ENCODE measurements at regions of chr3 and their contacts with region 1.

Region 1: GRCh38 chr3:149752051-149752787 is at the start of gene COMMD2:
- DNase-seq: peak; percentile 88
- ATAC-seq: peak; percentile 100
- H3K4me3 Mint-ChIP-seq: peak within 1 kb of the TSS; percentile 95
- H3K27ac Mint-ChIP-seq: peak within 1 kb of the TSS; percentile 91
- H3K4me1 Mint-ChIP-seq: peaks cover 25% of the 10 kb centered on the region
- H3K27me3 Mint-ChIP-seq: no peaks in the 10 kb centered on the region
- total RNA-seq, gene COMMD2: 29.4 to 29.5 TPM

Region 2: DNA sequence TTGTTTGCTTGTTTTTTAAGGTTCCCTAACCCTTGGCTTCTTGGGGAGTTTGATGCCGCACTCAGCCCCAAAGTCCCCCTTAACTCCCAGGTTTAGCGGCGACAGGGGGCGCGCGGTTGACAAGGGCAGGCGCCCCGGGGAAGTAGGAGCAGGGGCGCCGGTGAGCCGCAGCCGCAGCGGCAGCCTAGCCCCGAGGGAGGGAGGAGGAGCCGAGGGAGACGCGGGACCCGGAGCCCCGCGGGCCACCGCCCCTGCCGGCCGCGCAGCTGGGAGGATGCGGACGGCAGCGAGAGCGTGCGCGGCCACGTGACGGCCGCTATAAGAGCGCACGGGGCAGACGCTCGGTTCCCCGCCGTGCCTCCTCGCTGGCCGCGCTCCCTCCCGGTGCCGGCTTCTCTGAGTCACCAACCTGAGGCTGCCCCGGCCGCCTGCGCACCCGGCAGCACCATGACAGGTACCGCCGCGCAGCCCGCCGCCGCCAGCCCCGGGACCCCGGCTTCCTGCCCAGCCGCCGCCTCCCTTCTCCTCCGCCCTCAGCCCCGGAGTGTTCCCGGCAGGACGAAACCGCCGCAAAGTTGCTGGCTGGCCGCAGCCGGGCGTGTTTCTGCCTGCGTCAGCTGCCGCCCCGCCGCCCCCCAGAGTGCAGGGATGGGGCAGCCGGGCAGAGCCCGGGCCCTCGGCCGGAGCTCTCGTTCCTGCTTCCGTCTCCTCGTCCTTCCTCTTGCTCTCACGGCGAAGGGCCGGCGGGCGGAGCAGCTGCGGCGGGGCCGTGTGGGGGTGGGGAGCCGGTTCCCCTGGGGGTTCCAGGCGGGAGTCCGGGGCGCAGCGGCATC is 760.8 kb before region 1 on chr3 and contains the start of gene GYG1:
- CTCF ChIA-PET with region 1: no interaction called
- POLR2A ChIA-PET with region 1: no interaction called
- intact Hi-C with region 1: loop called in 1 of 2 experiments (anchors 5 kb)
- DNase-seq: peak; percentile 85
- ATAC-seq: peak; percentile 91
- H3K4me3 Mint-ChIP-seq: peak within 1 kb of the TSS; percentile 76
- H3K27ac Mint-ChIP-seq: peak within 1 kb of the TSS; percentile 83
- H3K4me1 Mint-ChIP-seq: peaks cover 20% of the 10 kb centered on the region
- H3K27me3 Mint-ChIP-seq: no peaks in the 10 kb centered on the region
- total RNA-seq, gene GYG1: 13.3 to 14.0 TPM

Region 3: DNA sequence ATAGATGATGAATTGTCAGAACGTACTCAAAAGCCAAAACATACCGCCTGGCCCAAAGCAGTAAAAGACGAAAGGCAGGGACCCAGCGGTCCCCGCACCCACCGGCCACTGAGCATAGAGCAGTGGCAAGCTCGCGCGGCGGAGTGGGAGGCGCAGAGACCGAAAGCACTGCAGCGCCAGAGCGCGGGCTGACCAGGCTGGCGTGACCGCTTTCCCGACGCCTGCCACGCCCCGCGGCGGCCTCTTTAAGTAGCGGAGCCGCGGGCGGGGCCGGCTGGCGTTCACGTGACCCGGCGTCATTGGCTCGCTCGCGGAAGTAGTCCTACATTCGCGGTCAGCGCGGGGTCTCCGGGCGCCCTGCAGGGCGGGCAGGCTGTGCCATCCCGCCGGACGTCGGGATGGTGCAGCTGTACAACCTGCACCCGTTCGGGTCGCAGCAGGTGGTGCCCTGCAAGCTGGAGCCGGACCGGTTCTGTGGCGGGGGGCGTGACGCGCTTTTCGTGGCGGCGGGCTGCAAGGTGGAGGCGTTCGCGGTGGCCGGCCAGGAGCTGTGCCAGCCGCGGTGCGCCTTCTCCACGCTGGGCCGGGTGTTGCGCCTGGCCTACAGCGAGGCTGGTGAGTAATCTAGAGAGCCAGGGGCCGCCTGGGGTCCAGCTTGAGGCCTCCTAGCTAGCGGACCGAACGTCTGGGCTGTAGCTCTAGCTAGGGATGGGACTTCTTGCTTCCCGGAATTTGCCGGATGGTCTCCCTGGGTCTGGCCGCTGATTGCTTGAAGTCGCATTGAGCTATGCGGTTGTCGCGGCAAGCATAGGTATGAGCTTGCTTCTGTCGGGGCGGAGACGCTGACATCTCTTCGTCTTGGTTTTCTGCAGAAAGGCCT is 622.7 kb before region 1 on chr3 and contains the start of gene HPS3:
- CTCF ChIA-PET with region 1: no interaction called
- POLR2A ChIA-PET with region 1: no interaction called
- intact Hi-C with region 1: loop called in 1 of 2 experiments (anchors 5 kb)
- DNase-seq: peak; percentile 90
- ATAC-seq: peak; percentile 91
- H3K4me3 Mint-ChIP-seq: peak within 1 kb of the TSS; percentile 90
- H3K27ac Mint-ChIP-seq: peak within 1 kb of the TSS; percentile 82
- H3K4me1 Mint-ChIP-seq: peaks cover 37% of the 10 kb centered on the region
- H3K27me3 Mint-ChIP-seq: peaks cover 8% of the 10 kb centered on the region
- total RNA-seq, gene HPS3: 18.0 to 20.2 TPM

Region 4: DNA sequence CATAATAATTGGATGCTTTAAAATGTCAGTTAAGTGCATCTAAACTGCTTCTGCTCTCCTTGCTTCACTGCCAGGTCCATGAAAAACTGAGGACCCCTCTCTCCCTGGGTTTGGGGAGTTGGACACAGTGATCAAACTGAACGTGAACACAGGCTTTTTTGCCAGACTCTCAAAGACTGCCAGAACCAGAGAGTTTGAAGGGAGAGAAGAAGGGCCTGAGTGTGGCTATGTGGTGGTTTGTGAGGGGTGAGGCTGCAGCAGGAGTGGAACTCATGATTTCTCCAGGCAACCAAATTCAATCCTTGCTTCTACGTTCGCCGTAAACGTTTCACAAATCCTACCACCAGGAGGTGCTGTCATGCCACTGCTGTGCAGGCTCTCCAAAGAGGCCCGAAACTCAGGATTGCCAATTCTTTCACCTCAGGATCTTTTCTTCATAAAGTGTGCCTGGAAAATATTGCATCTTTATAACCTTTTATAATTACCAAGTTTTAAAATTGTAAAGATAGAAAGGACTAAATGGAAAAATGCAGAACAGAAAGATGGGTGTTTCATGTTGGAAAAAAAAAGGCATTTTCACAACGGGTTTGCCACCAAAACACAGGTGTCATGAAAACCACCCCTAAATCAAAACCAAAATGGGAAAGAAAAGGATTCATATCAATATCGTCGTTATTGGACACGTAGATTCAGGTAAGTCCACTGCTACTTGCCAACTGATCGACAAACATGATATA is 258.0 kb before region 1 on chr3:
- CTCF ChIA-PET with region 1: no interaction called
- POLR2A ChIA-PET with region 1: no interaction called
- intact Hi-C with region 1: loop called in 1 of 2 experiments (anchors 1 kb)
- DNase-seq: peak; percentile 67
- ATAC-seq: no peak
- H3K4me3 Mint-ChIP-seq: no peak overlapping the region
- H3K27ac Mint-ChIP-seq: no peak overlapping the region
- H3K4me1 Mint-ChIP-seq: no peaks in the 10 kb centered on the region
- H3K27me3 Mint-ChIP-seq: peaks cover 25% of the 10 kb centered on the region

Region 5: DNA sequence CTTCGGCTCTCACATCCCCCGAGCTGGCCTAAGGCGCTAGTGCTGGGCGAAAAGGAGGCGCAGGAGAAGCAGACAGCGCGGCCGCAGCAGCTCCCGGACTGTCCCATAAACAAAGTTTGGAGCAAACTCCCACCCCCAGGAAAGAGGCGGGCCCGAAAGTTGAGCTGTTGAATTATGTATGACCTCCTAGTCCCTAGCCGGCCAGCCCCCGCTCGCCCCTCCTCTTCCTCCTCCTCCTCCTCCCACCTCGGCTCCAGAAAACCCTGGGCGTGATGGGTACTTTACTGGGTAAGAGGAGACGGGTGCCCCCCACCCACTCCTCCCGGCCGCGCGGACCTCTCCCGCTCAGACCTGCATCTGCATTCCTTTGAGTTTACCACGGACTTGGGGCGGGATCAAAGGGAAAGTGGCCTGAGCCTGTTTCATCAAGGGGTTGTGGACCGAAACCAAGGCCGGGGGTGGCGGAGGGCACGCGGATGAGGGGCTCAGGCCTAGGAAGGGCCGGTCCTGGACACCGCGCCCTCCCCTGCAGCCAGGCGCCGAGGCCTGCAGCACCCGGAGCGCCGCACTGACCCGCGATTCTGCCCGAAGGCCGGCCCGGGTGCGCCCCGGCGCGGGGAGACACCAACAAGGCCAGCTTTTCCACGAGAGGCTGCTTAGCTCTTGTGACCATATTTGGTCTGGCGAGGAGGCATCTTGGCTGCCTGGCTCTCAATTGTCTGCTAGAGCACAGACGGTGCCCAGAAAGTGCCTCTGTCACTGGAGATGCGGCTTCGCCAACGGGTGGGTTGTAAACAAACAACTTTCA is 94.1 kb before region 1 on chr3 and contains the start of gene WWTR1:
- CTCF ChIA-PET with region 1: interaction called, 3 read pairs
- POLR2A ChIA-PET with region 1: no interaction called
- intact Hi-C with region 1: loop called in 1 of 2 experiments (anchors 2 kb)
- DNase-seq: peak; percentile 61
- ATAC-seq: peak; percentile 71
- H3K4me3 Mint-ChIP-seq: peak within 1 kb of the TSS; percentile 69
- H3K27ac Mint-ChIP-seq: peak within 1 kb of the TSS; percentile 57
- H3K4me1 Mint-ChIP-seq: peaks cover 12% of the 10 kb centered on the region
- H3K27me3 Mint-ChIP-seq: peaks cover 50% of the 10 kb centered on the region
- total RNA-seq, gene WWTR1: 0.46 to 0.54 TPM

Region 6: DNA sequence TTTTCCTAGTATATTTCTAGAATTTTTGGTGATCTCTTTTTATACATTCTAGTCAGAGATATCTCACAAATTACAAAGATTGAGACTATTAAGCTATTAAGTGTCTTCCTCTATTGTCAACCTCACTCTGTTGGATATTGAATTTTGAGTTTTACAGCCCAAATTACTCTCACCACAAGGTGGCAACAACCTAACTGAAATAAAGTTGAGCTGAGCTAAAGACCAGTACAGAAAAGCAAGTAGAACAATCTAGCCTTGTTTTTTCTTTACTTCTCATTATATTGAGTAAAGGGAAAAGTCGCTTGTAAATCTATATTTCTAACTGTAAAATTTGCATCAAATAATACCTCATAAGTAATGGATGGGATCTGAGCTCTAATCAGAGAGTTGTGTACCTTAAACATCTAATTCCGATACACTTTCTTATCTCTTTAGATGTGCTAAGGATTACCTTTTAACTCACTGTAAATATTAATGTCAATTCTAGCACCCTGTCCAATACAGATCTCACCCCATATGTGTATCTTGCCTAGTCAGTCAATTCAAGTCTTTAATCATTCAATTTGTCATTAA is 13.6 kb after region 1 on chr3:
- CTCF ChIA-PET with region 1: interaction called, 24 read pairs
- POLR2A ChIA-PET with region 1: no interaction called
- intact Hi-C with region 1: no loop called
- DNase-seq: no peak
- ATAC-seq: no peak
- H3K4me3 Mint-ChIP-seq: no peak overlapping the region
- H3K27ac Mint-ChIP-seq: no peak overlapping the region
- H3K4me1 Mint-ChIP-seq: no peaks in the 10 kb centered on the region
- H3K27me3 Mint-ChIP-seq: peaks cover 24% of the 10 kb centered on the region

Region 7: DNA sequence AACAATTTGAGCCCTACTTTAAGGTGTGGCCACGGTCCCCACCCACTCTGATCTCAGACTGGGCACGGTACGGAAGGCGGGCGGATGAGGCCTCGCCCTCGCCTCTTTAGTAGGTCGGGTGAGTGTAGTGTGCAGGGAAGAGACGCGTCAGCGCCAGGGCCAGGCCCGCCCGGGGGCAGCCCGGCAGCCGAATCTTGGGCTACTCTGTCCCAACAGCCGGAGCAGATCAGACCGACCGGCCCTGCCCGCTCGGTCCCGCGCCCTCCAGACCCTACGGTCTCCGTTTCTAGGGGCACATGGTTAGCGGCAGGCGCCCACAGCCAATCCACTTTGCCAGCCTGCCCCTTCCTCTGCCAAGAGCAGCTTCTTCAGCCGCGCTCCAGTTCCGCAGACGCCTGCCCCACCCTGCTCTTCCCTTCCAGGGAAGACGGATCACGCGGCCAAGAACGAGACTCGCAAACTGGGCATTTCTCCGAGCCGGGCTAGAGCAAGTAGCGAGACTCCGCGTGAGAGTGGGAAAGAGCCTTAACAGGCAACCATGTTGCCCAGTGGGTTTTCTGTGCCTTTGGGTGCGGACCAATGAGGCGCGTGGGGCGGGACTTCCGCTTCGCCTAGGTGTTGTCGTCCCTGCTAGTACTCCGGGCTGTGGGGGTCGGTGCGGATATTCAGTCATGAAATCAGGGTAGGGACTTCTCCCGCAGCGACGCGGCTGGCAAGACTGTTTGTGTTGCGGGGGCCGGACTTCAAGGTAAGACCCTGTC is 60.6 kb after region 1 on chr3 and contains the start of gene RNF13:
- CTCF ChIA-PET with region 1: interaction called, 13 read pairs
- POLR2A ChIA-PET with region 1: no interaction called
- intact Hi-C with region 1: loop called (anchors 1 kb)
- DNase-seq: peak; percentile 96
- ATAC-seq: peak; percentile 95
- H3K4me3 Mint-ChIP-seq: peak within 1 kb of the TSS; percentile 95
- H3K27ac Mint-ChIP-seq: peak within 1 kb of the TSS; percentile 100
- H3K4me1 Mint-ChIP-seq: peaks cover 46% of the 10 kb centered on the region
- H3K27me3 Mint-ChIP-seq: peaks cover 3% of the 10 kb centered on the region
- total RNA-seq, gene RNF13: 28.8 to 41.2 TPM